Panc1 (cell line): ENCODE measurements at regions of chr18 and their contacts with region 1.

Region 1: GRCh38 chr18:26159353-26159752 is 25.7 kb downstream of the PSMA8 start:
- DNase-seq: no peak
- ATAC-seq: no peak
- H3K4me3 ChIP-seq: no peak overlapping the region
- H3K27ac ChIP-seq: no peak overlapping the region
- H3K4me1 ChIP-seq: no peaks in the 10 kb centered on the region
- H3K27me3 ChIP-seq: no peaks in the 10 kb centered on the region
- CTCF ChIP-seq: peak; percentile 34; the same call in 1 of the 2 replicates

Region 2: DNA sequence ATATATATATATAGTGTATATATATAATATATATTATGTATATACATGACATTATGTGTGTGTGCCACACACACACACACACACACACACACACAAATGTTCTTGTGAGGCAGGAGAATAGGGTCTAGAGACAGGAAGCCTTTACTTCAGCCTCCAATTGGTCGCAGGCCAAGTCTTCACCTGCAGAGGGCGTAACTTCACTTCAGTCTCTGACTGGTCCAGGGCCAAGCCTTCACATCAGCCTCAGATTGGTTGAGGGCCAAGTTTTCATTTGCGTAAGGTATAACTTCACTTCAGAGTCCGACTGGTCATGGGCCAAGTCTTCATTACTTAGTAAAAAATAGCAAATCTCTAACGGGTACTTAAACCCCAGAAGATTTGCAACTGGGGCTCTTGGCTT is 55.8 kb before region 1 on chr18:
- CTCF ChIA-PET with region 1: no interaction called
- POLR2A ChIA-PET with region 1: no interaction called
- in situ Hi-C with region 1: no loop called
- intact Hi-C with region 1: loop called (anchors 10 kb)
- DNase-seq: no peak
- ATAC-seq: no peak
- H3K4me3 ChIP-seq: no peak overlapping the region
- H3K27ac ChIP-seq: no peak overlapping the region
- H3K4me1 ChIP-seq: no peaks in the 10 kb centered on the region
- H3K27me3 ChIP-seq: no peaks in the 10 kb centered on the region
- CTCF ChIP-seq: peak; percentile 39